CD4-positive, alpha-beta memory T cell (primary cell): ENCODE measurements at regions of chr6 and their contacts with region 1.

Region 1: GRCh38 chr6:109705258-109705657 is 14.2 kb downstream of the FIG4 start:
- DNase-seq: peak; percentile 58 to 69 (median 65)
- H3K4me3 ChIP-seq: no peak overlapping the region
- H3K4me3 Mint-ChIP-seq: no peak overlapping the region
- H3K27ac ChIP-seq: no peak overlapping the region
- H3K27ac Mint-ChIP-seq: peak overlapping the region in 2 of 7 donors; percentile 14
- H3K4me1 ChIP-seq: no peaks in the 10 kb centered on the region
- H3K4me1 Mint-ChIP-seq: peaks cover 10 to 16% (median 15%) of the 10 kb centered on the region in 4 donors
- H3K27me3 ChIP-seq: no peaks in the 10 kb centered on the region
- H3K27me3 Mint-ChIP-seq: no peaks in the 10 kb centered on the region

Region 2: GRCh38 chr6:109717971-109718370 is 12.7 kb after region 1 on chr6:
- CTCF ChIA-PET with region 1: interaction called, 14 read pairs
- POLR2A ChIA-PET with region 1: no interaction called
- intact Hi-C with region 1: no loop called
- DNase-seq: no peak
- H3K4me3 ChIP-seq: no peak overlapping the region
- H3K4me3 Mint-ChIP-seq: no peak overlapping the region
- H3K27ac ChIP-seq: no peak overlapping the region
- H3K27ac Mint-ChIP-seq: no peak overlapping the region
- H3K4me1 ChIP-seq: no peaks in the 10 kb centered on the region
- H3K4me1 Mint-ChIP-seq: peaks cover 0 to 5% (median 0%) of the 10 kb centered on the region in 4 donors
- H3K27me3 ChIP-seq: no peaks in the 10 kb centered on the region
- H3K27me3 Mint-ChIP-seq: no peaks in the 10 kb centered on the region

Region 3: DNA sequence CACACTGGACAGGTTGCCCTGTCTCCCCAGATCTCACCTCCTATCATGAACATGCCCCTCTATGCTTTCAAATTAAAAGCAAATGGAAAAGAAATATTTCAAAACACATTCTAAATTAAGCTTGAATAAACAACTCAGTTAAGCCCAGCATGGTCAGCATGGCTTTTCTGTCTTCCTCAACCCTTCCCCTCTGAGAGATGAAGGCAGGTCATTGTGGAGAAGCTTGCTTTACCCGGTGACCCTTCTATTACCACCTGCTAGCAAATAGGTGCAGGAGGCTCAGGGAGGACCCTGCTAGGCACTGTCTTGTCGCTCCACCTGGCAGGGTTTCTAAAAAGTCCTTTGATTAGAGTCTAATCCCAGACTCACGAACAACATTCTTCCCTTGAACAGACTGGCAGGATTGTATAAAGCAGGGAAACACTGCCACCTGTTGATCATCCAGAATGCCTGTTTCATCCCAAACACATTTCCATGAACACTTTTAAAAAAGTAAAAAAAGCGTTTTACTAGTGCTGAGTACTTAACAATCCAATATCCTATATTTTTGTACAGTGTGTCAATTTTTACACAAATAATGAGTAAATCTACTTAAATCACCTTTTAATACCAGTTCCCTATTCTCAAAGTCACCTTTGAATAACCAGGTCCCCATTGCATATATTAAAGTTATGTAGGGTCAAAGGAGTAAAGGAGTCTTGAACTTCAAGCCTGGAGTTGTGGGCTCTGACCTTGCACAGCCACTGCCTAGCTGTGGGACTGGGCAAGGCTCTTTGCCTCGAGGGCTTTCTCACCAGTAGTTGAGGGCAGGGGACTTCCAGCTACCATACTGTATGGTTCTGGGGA is 348.4 kb after region 1 on chr6:
- CTCF ChIA-PET with region 1: interaction called, 9 read pairs
- POLR2A ChIA-PET with region 1: no interaction called
- intact Hi-C with region 1: loop called (anchors 1 kb)
- DNase-seq: peak in 4 of 5 donors; percentile 5 to 17 (median 8)
- H3K4me3 ChIP-seq: no peak overlapping the region
- H3K4me3 Mint-ChIP-seq: no peak overlapping the region
- H3K27ac ChIP-seq: no peak overlapping the region
- H3K27ac Mint-ChIP-seq: no peak overlapping the region
- H3K4me1 ChIP-seq: no peaks in the 10 kb centered on the region
- H3K4me1 Mint-ChIP-seq: peaks cover 0 to 2% (median 0%) of the 10 kb centered on the region in 4 donors
- H3K27me3 ChIP-seq: no peaks in the 10 kb centered on the region
- H3K27me3 Mint-ChIP-seq: peaks cover 5 to 13% of the 10 kb centered on the region in 2 donors

Region 4: DNA sequence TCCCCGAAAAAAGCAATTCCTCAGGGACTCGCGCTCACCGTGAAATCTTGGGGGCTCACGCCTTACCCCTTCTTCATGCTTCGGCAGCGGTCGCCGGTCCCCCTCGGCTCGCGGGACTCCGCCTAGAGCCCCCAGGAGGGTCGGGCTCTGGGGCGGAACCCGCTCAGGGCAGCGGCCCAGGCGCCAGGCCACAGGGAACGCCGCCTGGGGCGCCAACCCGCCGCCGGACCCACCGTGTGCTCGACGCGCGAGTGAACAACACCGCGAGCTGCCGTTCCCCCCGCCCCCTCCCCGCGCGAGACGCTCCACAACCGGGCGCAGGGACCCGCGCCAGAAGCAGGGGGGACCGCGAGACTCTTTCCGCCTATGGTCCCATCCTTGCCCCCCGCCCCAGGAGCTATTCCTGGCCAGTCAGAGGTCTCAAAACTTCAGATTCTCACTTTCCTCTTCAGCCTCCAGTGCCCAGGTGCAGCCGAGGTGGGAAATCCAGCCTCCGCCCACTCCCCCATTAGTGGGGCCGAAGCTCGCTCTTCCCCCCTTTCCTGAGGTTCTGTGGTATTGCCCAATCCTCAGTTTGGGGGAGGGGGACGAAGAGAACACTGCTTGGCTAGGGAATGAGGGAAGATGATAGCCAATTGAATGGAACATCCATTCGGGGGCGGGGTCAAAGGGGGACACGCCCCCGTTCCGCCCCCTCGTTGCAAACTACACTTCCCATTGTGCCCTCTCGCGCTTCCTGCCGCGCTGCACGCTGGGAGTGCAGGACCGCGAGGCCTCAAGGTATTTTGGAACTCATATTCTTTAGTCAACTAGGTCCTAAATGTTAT is 474.4 kb after region 1 on chr6 and contains the start of gene WASF1:
- CTCF ChIA-PET with region 1: no interaction called
- POLR2A ChIA-PET with region 1: no interaction called
- intact Hi-C with region 1: loop called (anchors 5 kb)
- DNase-seq: peak; percentile 90 to 93 (median 92)
- H3K4me3 ChIP-seq: peak within 1 kb of the TSS; percentile 77 to 92
- H3K4me3 Mint-ChIP-seq: peak within 1 kb of the TSS; percentile 82 to 92 (median 86)
- H3K27ac ChIP-seq: peak within 1 kb of the TSS; percentile 88
- H3K27ac Mint-ChIP-seq: peak within 1 kb of the TSS; percentile 24 to 90 (median 64)
- H3K4me1 ChIP-seq: peaks cover 46% of the 10 kb centered on the region
- H3K4me1 Mint-ChIP-seq: peaks cover 5 to 7% (median 6%) of the 10 kb centered on the region in 4 donors
- H3K27me3 ChIP-seq: no peaks in the 10 kb centered on the region
- H3K27me3 Mint-ChIP-seq: peaks cover 4 to 5% of the 10 kb centered on the region in 2 donors
- total RNA-seq, gene WASF1: 0.39 to 0.70 TPM

Region 5: DNA sequence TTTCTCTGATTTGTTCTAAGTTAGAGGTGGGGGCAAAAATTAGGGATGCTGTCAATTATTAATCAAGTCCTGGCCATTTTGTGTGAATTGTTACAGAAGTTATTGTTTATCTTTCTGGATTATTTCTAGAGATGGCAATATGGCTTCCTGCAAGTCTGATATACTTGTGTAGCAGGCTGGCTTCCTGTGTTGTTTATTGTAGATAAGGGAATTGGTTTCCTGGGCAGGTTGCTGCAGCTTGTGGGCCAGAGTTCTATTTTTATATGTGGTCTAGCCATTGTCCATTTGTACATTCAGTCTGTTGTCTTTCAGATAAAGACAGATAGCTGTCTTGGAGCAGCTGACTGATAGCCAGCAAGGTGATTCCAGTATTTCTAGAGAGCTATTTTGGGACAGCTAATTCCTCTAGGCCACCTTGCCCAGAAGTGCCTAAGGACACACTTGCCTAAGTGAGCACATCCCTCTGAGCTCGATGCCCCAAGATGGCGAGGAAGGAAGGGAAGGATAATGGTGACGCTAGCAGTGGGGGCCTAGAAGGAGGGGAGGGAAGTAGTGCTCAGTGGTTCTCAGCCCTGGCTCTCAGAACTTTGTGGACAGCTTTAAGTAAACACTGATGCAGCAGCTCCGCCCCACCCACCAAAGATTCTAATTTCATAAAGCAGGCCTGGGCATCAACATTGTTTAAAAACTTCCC is 684.6 kb after region 1 on chr6:
- CTCF ChIA-PET with region 1: interaction called, 51 read pairs
- POLR2A ChIA-PET with region 1: no interaction called
- intact Hi-C with region 1: loop called (anchors 1 kb)
- DNase-seq: no peak
- H3K4me3 ChIP-seq: no peak overlapping the region
- H3K4me3 Mint-ChIP-seq: peak overlapping the region in 1 of 8 donors; percentile 7
- H3K27ac ChIP-seq: no peak overlapping the region
- H3K27ac Mint-ChIP-seq: peak overlapping the region in 2 of 7 donors; percentile 43 to 74
- H3K4me1 ChIP-seq: no peaks in the 10 kb centered on the region
- H3K4me1 Mint-ChIP-seq: peaks cover 3 to 13% (median 11%) of the 10 kb centered on the region in 4 donors
- H3K27me3 ChIP-seq: no peaks in the 10 kb centered on the region
- H3K27me3 Mint-ChIP-seq: no peaks in the 10 kb centered on the region